GM13977 (cell line): ENCODE measurements at regions of chr14 and their contacts with region 1.

Region 1: DNA sequence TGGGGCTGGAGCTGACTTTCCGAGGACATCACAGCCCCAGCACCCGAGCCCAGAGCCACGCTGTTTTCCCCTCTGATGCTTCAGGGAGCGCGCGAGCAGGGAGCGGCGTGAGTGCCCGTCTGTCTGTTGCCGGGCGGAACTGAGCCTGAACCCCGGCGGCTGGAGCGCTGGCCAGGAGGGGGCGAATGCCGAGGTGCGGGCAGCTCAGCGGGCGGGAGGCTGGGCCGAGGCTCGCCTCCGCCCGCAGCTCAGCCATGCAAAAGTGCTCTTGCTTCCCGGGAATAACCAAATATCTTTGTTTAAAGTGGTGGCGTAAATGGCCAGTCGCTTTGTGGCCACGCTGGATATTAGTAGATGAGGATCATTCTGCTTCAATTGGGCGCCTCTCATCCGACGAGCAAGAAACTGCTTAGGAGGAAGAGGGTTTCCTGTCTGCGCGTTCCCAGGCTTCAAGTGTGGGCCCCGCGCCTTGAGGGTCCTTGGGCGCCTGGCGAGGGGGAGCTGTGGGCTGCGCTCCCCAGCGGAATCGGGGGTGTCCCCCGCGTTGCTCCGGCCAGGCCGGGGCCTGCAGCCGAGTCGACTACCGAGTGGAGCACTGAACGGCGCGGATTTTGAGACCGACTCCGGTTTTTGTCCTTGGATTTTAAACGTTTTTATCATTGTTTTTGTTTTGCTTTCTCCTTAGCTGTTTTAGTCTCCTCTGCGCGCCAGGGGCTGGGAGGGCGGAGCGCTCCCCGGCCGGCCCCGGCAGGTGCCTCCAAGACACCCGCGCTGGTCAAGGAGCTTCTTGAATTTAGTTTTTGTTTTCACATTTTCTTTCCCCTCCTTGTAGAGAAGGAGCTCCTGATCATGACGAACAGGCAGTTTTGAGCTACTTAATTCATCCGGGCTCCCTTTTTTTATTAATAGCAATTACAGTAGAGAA is 831 bp upstream of the NKX2-1 start:
- DNase-seq: peak; percentile 76
- CTCF ChIP-seq: peak; percentile 28

Region 2: GRCh38 chr14:36580856-36581831 is 60.3 kb after region 1 on chr14:
- in situ Hi-C with region 1: loop called (anchors 10 kb)
- DNase-seq: peak; percentile 59
- CTCF ChIP-seq: no peak

Region 3: DNA sequence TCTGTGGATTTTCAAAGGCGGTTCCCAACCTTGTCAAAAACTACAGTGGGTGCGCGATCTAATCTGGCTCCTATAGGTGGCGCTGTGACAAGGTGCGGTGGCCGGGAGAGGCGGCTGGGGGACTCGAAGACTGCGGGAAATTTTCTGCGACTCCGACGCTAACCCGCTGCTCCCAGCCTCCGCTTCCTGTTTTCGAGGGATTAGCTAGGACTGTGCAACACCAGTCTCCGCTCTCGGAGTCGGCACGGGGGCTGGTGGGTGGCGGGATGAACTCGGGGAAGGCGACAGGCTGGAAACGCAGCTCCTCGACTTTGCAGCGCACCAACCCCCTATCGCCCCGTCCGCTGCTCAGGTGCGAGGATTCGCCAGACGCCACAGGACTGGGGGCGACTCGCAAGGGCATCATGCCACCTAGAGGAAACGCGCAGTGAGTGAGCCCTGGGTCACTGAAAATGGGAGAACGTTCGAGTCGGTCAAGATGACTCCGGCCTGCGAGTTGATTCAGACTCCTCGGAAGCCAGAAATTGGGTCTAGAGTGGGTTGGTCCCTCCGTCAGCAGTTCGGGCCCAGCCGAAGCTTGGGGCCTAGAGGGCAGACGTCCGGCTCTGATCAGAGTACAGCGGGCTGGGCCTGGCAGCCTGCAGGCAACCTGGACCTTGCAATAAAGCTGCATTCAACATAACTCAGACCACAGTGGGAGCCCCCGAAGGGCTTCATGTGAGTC is 135.3 kb after region 1 on chr14:
- in situ Hi-C with region 1: loop called (anchors 10 kb)
- DNase-seq: peak; percentile 46
- CTCF ChIP-seq: peak; percentile 49

Region 4: GRCh38 chr14:36690301-36691033 is 169.6 kb after region 1 on chr14:
- in situ Hi-C with region 1: no loop called
- DNase-seq: no peak
- CTCF ChIP-seq: no peak

Region 5: GRCh38 chr14:37197421-37198272 is 676.8 kb after region 1 on chr14 and contains the start of gene MIPOL1:
- in situ Hi-C with region 1: no loop called
- DNase-seq: no peak
- CTCF ChIP-seq: no peak

Region 6: DNA sequence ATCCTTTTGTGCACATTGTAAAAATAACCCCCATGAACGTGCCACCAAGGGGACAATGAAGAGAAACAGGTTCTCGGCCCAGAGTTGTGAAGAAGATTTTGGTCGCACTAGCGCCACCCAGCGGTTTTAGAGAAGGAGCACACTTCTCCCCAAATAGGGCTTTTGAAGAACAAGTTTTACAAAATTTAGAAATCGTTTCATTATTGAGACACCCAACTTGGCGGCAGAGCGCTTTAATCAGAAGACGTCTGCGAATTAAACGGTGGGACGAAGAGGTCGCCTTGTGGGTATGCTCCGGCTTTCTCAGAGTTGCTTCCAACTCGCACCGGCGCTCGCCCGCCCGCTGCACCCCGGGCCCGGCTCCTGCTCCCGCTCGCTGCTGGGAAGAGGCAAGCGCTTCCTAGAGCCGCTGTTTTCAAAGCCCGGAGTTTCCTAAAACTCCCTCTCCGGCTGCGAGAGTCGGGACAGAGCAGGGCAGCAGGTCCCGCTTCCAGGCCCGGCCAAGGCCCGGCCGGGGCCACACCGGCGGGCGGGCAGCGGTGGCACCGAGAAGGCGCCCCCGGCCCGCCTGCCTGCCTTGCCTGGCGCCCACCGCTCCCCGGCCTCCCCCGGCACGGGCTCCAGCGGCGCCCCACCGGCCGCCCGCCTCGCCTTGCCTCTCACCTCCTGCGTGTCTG is 1073.5 kb after region 1 on chr14:
- in situ Hi-C with region 1: loop called (anchors 25 kb)
- DNase-seq: peak; percentile 71
- CTCF ChIP-seq: peak; percentile 41